ENCODE measurements at regions of chr6 and their contacts with region 1.

Region 1: GRCh38 chr6:26312501-26313390 is 52.3 kb upstream of the BTN3A2 start:
- DNase-seq: no peak
- ATAC-seq: peak; percentile 91
- H3K4me3 ChIP-seq: peak overlapping the region; percentile 56 to 92
- H3K27ac ChIP-seq: peak overlapping the region; percentile 69
- H3K4me1 ChIP-seq: peaks cover 9% of the 10 kb centered on the region
- H3K27me3 ChIP-seq: no peaks in the 10 kb centered on the region
- CTCF ChIP-seq: no peak

Region 2: GRCh38 chr6:26156076-26156849 is 156.5 kb before region 1 on chr6:
- CTCF ChIA-PET with region 1: no interaction called
- POLR2A ChIA-PET with region 1: no interaction called
- in situ Hi-C with region 1: no loop called
- intact Hi-C with region 1: no loop called
- DNase-seq: peak; percentile 87
- ATAC-seq: peak; percentile 82
- H3K4me3 ChIP-seq: peak overlapping the region; percentile 59 to 94
- H3K27ac ChIP-seq: peak overlapping the region; percentile 99
- H3K4me1 ChIP-seq: peaks cover 11% of the 10 kb centered on the region
- H3K27me3 ChIP-seq: no peaks in the 10 kb centered on the region
- CTCF ChIP-seq: no peak

Region 3: DNA sequence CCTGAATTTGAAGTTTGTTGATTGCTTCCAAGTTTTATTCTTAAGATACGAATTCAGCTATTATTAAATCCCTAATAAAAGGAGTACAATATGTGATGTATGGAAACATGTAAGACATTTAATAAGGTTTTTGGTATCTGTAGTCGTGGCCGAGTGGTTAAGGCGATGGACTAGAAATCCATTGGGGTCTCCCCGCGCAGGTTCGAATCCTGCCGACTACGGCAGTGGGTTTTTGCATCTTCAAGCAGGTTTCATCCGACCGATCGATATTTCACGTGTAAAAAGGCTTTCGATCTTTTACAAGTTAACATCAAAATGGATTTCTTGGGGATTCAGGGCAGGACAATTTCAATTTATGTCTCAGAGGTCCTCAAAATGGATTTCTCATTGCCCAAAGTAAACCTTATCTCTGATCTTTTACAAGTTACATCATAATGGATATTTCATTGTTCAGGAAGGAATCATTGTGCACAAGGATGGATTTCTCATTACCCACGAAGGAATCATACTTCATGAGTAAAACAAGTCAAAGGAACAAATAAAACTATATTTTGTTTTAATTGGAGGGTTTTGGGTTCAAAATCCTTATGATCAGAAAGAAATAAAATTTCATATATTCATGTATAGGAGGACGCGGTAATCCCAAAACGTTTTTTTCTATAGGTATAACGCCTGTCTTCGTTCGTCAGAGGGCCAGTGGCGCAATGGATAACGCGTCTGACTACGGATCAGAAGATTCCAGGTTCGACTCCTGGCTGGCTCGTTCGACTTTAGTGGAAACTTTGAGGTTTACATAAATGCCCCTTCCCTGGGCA is 14.9 kb after region 1 on chr6:
- CTCF ChIA-PET with region 1: no interaction called
- POLR2A ChIA-PET with region 1: no interaction called
- in situ Hi-C with region 1: no loop called
- intact Hi-C with region 1: no loop called
- DNase-seq: no peak
- ATAC-seq: peak; percentile 79
- H3K4me3 ChIP-seq: peak overlapping the region; percentile 58 to 79
- H3K27ac ChIP-seq: peak overlapping the region; percentile 80
- H3K4me1 ChIP-seq: peaks cover 26% of the 10 kb centered on the region
- H3K27me3 ChIP-seq: no peaks in the 10 kb centered on the region
- CTCF ChIP-seq: no peak

Region 4: DNA sequence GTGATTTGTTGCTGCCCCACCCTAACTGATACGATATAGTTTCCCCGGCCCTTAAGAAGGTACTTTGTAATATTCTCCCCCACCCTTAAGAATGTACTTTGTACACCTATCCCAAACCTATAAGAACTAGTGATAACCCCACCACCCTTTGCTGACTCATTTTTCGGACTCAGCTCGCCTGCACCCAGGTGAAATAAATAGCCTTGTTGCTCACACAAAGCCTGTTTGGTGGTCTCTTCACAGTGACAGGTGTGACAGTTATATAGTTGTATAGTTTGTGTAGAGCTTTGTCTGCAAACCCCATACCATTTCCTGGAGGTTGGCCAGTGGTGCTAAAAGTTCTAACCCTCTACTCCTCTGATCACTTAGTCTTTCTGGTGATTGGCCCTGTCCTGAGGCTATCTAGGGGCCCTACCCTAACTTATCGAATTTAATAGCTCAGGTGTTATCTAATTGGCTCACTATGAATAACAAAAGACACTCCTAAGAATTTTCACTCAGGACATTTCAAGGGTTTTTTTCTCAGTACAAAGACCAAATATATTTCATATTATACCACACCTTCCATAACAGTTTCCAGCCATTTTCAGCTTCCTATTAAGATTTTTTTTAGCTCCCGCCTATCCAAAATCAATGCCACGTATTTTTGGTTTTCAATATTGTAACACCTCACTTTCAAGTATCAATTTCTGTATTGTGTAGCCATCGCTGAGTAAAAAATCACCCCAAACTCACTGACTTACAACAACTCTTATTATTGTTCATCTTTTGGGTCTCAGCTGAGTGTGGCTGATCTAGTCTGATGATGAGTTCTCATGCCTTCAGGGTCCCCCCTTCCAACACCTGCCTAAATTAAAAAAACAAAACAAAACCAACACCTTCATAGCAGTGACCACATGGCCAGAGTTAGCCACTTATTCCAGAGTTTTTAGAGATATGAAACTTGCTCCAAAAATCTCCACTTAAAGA is 177.5 kb after region 1 on chr6:
- CTCF ChIA-PET with region 1: no interaction called
- POLR2A ChIA-PET with region 1: interaction called, 13 read pairs
- in situ Hi-C with region 1: no loop called
- intact Hi-C with region 1: no loop called
- DNase-seq: no peak
- ATAC-seq: no peak
- H3K4me3 ChIP-seq: no peak overlapping the region
- H3K27ac ChIP-seq: no peak overlapping the region
- H3K4me1 ChIP-seq: no peaks in the 10 kb centered on the region
- H3K27me3 ChIP-seq: no peaks in the 10 kb centered on the region
- CTCF ChIP-seq: no peak